ENCODE measurements at regions of chr4 and their contacts with region 1.

Region 1: GRCh38 chr4:84582302-84583000 is 476 bp upstream of the CDS1 start:
- DNase-seq: peak; percentile 92
- H3K4me3 Mint-ChIP-seq: peak overlapping the region; percentile 90
- H3K27ac Mint-ChIP-seq: peak overlapping the region; percentile 86
- H3K4me1 Mint-ChIP-seq: peaks cover 30% of the 10 kb centered on the region
- H3K27me3 Mint-ChIP-seq: no peaks in the 10 kb centered on the region
- CTCF ChIP-seq: no peak

Region 2: GRCh38 chr4:84547211-84547610 is 35.2 kb before region 1 on chr4:
- CTCF ChIA-PET with region 1: interaction called, 10 read pairs
- POLR2A ChIA-PET with region 1: no interaction called
- intact Hi-C with region 1: no loop called
- DNase-seq: peak; percentile 21
- H3K4me3 Mint-ChIP-seq: no peak overlapping the region
- H3K27ac Mint-ChIP-seq: no peak overlapping the region
- H3K4me1 Mint-ChIP-seq: peaks cover 8% of the 10 kb centered on the region
- H3K27me3 Mint-ChIP-seq: no peaks in the 10 kb centered on the region
- CTCF ChIP-seq: no peak

Region 3: DNA sequence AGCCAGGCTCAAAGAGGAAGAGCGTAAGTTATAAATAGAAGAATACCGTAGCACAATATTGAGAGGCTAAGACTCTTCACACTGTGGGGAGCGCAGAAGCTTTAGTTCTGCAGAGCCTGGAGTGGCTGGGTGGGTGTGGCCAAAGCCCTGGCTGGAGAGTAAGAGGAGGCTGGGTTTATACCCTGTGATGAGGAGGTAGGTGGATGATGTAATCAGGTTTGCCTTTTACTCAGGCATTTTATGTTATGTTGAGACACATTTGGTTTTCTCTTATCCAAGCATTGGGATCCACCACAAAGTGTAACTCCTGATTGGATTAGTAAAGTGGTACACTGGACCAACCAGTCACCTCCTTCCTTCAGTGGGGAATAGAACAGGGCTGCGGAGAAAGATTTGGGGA is 14.4 kb after region 1 on chr4:
- CTCF ChIA-PET with region 1: interaction called, 18 read pairs
- POLR2A ChIA-PET with region 1: interaction called, 96 read pairs
- intact Hi-C with region 1: no loop called
- DNase-seq: peak; percentile 84
- H3K4me3 Mint-ChIP-seq: no peak overlapping the region
- H3K27ac Mint-ChIP-seq: peak overlapping the region; percentile 65
- H3K4me1 Mint-ChIP-seq: peaks cover 19% of the 10 kb centered on the region
- H3K27me3 Mint-ChIP-seq: no peaks in the 10 kb centered on the region
- CTCF ChIP-seq: no peak

Region 4: DNA sequence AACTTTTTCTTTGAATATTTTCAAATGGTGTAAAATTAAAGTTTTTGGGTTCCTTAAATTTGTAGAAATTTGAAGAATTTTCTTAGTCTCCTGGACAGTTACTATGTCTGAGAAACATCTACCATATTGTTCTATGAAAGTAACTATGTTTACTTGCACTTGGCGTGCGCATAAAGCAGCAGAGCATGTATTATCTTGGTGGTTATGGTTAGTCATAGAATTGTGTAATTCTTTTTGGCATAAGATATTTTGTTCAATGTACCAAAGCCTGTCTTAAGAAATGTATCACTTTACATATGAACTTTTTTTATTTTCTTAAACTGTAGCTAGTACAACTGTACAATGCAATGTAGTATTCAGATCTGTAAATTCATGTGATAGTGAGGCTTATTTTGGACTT is 49.6 kb after region 1 on chr4:
- CTCF ChIA-PET with region 1: interaction called, 4 read pairs
- POLR2A ChIA-PET with region 1: interaction called, 87 read pairs
- intact Hi-C with region 1: loop called (anchors 2 kb)
- DNase-seq: peak; percentile 86
- H3K4me3 Mint-ChIP-seq: peak overlapping the region; percentile 50
- H3K27ac Mint-ChIP-seq: peak overlapping the region; percentile 91
- H3K4me1 Mint-ChIP-seq: peaks cover 11% of the 10 kb centered on the region
- H3K27me3 Mint-ChIP-seq: no peaks in the 10 kb centered on the region
- CTCF ChIP-seq: no peak

Region 5: GRCh38 chr4:84647312-84647884 is 64.9 kb after region 1 on chr4:
- CTCF ChIA-PET with region 1: interaction called, 11 read pairs
- POLR2A ChIA-PET with region 1: interaction called, 8 read pairs
- intact Hi-C with region 1: no loop called
- DNase-seq: no peak
- H3K4me3 Mint-ChIP-seq: no peak overlapping the region
- H3K27ac Mint-ChIP-seq: no peak overlapping the region
- H3K4me1 Mint-ChIP-seq: no peaks in the 10 kb centered on the region
- H3K27me3 Mint-ChIP-seq: no peaks in the 10 kb centered on the region
- CTCF ChIP-seq: no peak

Region 6: GRCh38 chr4:84691170-84691691 is 108.8 kb after region 1 on chr4:
- CTCF ChIA-PET with region 1: interaction called, 22 read pairs
- POLR2A ChIA-PET with region 1: interaction called, 17 read pairs
- intact Hi-C with region 1: loop called (anchors 2 kb)
- DNase-seq: peak; percentile 93
- H3K4me3 Mint-ChIP-seq: peak overlapping the region; percentile 60
- H3K27ac Mint-ChIP-seq: peak overlapping the region; percentile 94
- H3K4me1 Mint-ChIP-seq: peaks cover 16% of the 10 kb centered on the region
- H3K27me3 Mint-ChIP-seq: no peaks in the 10 kb centered on the region
- CTCF ChIP-seq: no peak

Region 7: DNA sequence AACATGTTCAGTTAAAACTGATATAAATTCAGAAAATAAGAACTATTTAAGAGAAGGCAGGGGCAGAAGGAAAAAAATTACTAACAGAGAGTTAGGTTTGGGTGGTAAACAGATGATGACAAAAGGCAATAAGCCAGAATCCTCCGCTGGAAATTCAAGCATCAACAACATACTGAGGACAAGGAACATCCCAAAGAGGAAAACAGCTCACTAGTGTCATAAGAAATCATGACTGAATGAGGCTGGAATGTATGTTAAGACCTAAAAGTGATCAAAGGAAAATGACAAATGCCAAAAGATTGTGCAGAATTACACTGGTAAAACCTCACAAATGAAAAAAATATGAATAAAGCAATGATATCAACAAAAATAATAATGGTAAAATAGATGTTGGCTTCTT is 295.6 kb after region 1 on chr4:
- CTCF ChIA-PET with region 1: no interaction called
- POLR2A ChIA-PET with region 1: no interaction called
- intact Hi-C with region 1: no loop called
- DNase-seq: peak; percentile 42
- H3K4me3 Mint-ChIP-seq: no peak overlapping the region
- H3K27ac Mint-ChIP-seq: peak overlapping the region; percentile 75
- H3K4me1 Mint-ChIP-seq: peaks cover 32% of the 10 kb centered on the region
- H3K27me3 Mint-ChIP-seq: no peaks in the 10 kb centered on the region
- CTCF ChIP-seq: no peak

Region 8: GRCh38 chr4:84966383-84967242 is 384.2 kb after region 1 on chr4 and contains the start of gene WDFY3:
- CTCF ChIA-PET with region 1: interaction called, 11 read pairs
- POLR2A ChIA-PET with region 1: interaction called, 36 read pairs
- intact Hi-C with region 1: loop called (anchors 1 kb)
- DNase-seq: peak; percentile 93
- H3K4me3 Mint-ChIP-seq: peak within 1 kb of the TSS; percentile 88
- H3K27ac Mint-ChIP-seq: peak within 1 kb of the TSS; percentile 97
- H3K4me1 Mint-ChIP-seq: peaks cover 4% of the 10 kb centered on the region
- H3K27me3 Mint-ChIP-seq: no peaks in the 10 kb centered on the region
- CTCF ChIP-seq: no peak
- total RNA-seq, gene WDFY3: 73.7 and 90.7 TPM in 2 replicates

Measured in MCF 10A (cell line).